GM13977 (cell line): ENCODE measurements at regions of chr1 and their contacts with region 1.

Region 1: GRCh38 chr1:212981571-212982328 is 31.4 kb downstream of the VASH2 start:
- DNase-seq: peak; percentile 22
- CTCF ChIP-seq: no peak

Region 2: DNA sequence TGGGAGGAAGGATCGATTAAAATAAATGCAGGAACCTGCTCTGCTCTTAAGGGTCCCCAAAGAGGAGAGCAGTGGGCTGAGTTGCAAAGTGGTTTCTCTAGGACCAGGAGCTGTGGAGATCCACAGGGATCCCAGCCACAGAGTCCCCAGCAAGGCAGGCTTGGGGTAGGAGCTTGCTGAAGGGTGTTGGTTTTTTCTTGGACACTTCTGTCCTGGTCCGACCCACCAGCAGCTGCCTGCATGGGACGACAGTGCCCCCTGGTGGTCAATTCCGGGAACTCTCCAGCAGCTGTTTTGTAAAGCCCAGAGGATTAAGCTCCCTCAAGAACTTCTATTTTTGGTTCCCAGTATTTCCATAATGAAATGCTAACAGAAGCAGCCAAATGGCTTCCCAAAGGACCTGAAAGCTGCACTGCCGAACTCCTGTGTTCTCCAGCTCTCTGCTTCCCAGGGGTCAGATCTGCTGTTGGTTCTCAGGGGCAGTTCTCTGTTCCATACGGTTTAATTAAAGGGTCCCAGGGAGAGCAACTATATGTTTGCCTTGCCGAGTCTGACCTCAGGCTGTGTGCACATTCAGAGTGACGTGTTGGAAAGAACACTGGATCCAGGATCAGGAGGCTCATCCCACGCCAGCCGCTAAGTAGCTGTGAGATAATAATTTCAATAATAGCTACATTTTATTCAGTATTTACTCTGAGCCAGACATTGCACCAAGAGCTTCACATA is 525.8 kb before region 1 on chr1:
- in situ Hi-C with region 1: loop called (anchors 25 kb)
- DNase-seq: peak; percentile 83
- CTCF ChIP-seq: peak; percentile 92

Region 3: DNA sequence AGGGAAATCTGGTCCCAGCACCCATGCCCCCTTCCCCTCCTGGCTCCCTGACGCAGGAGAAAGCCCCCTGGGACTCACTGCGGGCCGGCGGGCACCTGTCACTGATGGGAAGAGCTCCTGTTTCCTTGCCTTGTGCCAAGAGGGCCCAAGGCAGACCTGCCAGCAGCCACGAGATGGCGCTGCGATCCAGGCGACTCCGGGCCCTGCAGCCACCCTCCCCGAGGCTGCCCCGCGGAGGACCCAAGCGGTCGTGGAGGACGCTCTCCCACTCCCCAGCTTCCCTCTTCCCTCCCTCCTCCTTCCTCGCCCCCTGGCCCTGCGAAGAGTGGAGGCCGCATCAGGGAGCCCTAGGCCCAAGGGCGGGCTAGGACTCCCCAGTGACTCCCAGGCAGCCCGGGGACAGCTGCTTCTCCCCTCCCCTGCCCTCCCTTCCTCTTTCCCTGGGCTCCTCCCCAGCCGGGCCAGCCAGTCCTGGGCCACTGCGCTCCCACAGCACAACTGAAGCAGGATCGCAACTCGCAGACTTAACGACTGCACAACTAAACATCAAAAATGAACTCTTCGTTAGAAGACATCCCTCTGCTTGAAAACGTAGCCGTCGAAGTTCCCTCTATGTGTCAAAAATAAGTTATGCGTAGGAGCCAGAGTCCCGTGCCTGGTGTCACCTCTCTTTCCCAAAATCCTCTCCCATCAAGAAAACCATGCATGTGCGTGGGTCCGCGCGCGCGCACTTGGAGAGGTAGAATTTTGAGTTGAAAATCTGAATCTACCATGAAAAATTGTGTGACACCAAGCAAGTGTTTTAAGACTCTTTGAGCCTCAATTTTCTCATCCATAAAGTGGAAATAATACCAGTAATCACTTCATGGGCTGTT is 316.3 kb before region 1 on chr1:
- in situ Hi-C with region 1: loop called (anchors 25 kb)
- DNase-seq: peak; percentile 81
- CTCF ChIP-seq: peak; percentile 99

Region 4: GRCh38 chr1:212814537-212815334 is 167.0 kb before region 1 on chr1:
- in situ Hi-C with region 1: loop called (anchors 10 kb)
- DNase-seq: no peak
- CTCF ChIP-seq: peak; percentile 36

Region 5: DNA sequence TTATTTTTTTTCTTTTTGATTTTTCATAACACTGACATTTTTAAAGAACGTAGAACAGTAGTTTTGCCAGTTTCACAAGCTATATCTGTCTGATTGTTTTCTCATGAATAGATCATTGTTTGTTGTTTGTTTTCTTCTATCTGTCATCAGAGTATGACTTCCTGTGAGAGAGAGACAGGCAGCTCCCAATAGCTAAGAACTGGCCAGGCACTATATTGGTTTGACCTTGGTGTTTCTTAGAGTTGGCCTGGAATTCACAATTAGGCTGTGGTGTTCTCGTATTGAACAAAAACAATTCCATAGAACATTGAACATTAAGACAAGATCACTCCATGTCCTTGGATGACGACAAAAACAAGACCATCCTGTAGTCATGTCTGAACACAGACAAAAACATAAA is 112.7 kb after region 1 on chr1:
- in situ Hi-C with region 1: no loop called
- DNase-seq: no peak
- CTCF ChIP-seq: no peak

Region 6: GRCh38 chr1:213435715-213436114 is 454.0 kb after region 1 on chr1:
- in situ Hi-C with region 1: no loop called
- DNase-seq: no peak
- CTCF ChIP-seq: no peak